Activated CD4-positive, alpha-beta memory T cell treated with anti-CD3 and anti-CD28 coated beads for 36 hours (primary cell): ENCODE measurements at regions of chr16 and their contacts with region 1.

Region 1: GRCh38 chr16:74998481-74999218 is at the start of gene ZNRF1:
- DNase-seq: peak; percentile 90
- H3K4me3 Mint-ChIP-seq: peak within 1 kb of the TSS; percentile 88
- H3K27ac Mint-ChIP-seq: peak within 1 kb of the TSS; percentile 84
- H3K4me1 Mint-ChIP-seq: peaks cover 32% of the 10 kb centered on the region
- H3K27me3 Mint-ChIP-seq: no peaks in the 10 kb centered on the region
- total RNA-seq, gene ZNRF1: 40.9 to 45.6 TPM

Region 2: DNA sequence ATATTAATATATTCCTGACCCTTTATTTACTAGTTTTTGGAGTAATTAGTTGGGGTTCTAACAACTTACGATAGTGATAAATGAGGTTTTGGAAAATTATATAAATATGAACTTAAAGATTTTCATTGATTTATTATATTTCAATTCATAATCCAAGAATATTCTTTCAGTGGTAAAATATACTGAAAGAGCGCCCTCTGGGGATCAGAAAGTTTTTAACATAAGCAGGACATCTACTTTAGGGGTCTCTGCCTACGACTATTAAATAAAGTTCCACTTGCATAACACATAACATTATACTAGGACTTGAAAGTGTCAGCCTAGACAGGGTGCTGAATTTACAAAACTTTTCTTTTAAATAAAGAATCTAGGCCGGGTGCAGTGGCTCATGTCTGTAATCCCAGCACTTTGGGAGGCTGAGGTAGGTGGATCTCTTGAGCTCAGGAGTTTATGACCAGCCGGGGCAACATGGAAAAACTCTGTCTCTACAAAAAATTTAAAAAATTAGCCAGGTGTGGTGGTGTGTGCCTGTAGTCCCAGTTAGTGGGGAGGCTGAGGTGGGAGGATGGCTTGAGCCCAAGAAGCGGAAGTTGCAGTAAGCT is 347.6 kb before region 1 on chr16:
- CTCF ChIA-PET with region 1: no interaction called
- POLR2A ChIA-PET with region 1: no interaction called
- intact Hi-C with region 1: no loop called
- DNase-seq: no peak
- H3K4me3 Mint-ChIP-seq: no peak overlapping the region
- H3K27ac Mint-ChIP-seq: no peak overlapping the region
- H3K4me1 Mint-ChIP-seq: peaks cover 30% of the 10 kb centered on the region
- H3K27me3 Mint-ChIP-seq: no peaks in the 10 kb centered on the region

Region 3: DNA sequence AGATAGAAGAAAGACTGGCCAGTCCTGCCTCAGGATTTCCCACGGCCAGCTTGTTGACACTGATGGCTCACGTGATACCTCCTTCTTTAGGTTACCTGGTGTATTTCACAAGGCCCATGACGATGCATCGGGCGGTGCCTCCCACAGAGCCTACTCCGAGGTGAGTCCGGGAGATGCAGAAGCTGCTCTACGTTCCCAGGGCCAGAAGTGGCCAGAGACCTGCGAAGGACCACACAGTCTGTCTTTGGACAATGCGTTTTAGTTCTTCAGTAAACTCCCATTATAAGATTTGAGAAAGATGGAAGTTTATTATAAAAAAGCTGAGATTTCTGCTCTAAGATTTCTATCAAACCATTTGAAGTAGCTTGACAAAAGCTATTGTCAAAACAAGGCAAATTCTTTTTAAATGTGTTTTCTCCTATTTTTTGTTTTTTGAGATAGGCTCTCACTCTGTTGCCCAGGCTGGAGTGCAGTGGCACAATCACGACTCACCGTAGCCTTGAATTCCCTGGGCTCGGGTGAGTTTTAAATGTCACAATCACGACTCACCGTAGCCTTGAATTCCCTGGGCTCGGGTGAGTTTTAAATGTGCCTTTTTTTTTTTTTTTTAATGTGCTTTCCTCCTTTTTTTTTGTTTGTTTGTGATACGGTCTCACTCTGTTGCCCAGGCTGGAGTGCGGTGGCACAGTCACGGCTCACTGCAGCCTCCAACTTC is 154.8 kb before region 1 on chr16:
- CTCF ChIA-PET with region 1: no interaction called
- POLR2A ChIA-PET with region 1: no interaction called
- intact Hi-C with region 1: no loop called
- DNase-seq: no peak
- H3K4me3 Mint-ChIP-seq: no peak overlapping the region
- H3K27ac Mint-ChIP-seq: no peak overlapping the region
- H3K4me1 Mint-ChIP-seq: no peaks in the 10 kb centered on the region
- H3K27me3 Mint-ChIP-seq: no peaks in the 10 kb centered on the region

Region 4: GRCh38 chr16:74984535-74985296 is 13.9 kb before region 1 on chr16 and contains the start of gene WDR59:
- CTCF ChIA-PET with region 1: interaction called, 21 read pairs
- POLR2A ChIA-PET with region 1: interaction called, 9 read pairs
- intact Hi-C with region 1: loop called (anchors 1 kb)
- DNase-seq: peak; percentile 99
- H3K4me3 Mint-ChIP-seq: peak within 1 kb of the TSS; percentile 86
- H3K27ac Mint-ChIP-seq: peak within 1 kb of the TSS; percentile 74
- H3K4me1 Mint-ChIP-seq: peaks cover 19% of the 10 kb centered on the region
- H3K27me3 Mint-ChIP-seq: no peaks in the 10 kb centered on the region
- total RNA-seq, gene WDR59: 63.5 to 65.7 TPM

Region 5: DNA sequence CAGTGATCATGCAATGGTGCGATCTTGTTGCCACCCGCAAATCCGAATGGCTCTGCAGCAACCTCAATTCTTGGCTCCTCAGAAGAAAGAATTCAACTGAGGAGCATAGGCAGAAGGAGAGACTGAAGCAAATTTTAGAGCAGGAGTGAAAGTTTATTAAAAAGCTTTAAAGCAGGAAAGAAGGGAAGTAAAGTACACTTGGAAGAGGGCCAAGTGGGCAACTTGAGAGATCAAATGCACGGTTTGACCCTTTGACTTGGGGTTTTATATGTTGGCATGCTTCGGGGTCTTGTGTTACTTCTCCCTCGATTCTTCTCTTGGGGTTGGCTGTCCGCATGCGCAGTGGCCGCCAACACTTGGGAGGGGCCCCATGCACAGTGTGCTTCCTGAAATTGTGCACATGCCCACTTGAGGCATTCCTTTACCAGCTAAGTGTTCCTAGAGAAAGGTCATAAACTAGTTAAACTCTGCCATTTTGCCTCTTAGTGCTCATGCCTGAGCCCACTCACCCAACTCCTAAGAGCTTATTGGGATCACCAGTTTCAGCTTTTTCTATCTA is 36.8 kb after region 1 on chr16:
- CTCF ChIA-PET with region 1: no interaction called
- POLR2A ChIA-PET with region 1: no interaction called
- intact Hi-C with region 1: no loop called
- DNase-seq: no peak
- H3K4me3 Mint-ChIP-seq: no peak overlapping the region
- H3K27ac Mint-ChIP-seq: no peak overlapping the region
- H3K4me1 Mint-ChIP-seq: peaks cover 6% of the 10 kb centered on the region
- H3K27me3 Mint-ChIP-seq: no peaks in the 10 kb centered on the region

Region 6: DNA sequence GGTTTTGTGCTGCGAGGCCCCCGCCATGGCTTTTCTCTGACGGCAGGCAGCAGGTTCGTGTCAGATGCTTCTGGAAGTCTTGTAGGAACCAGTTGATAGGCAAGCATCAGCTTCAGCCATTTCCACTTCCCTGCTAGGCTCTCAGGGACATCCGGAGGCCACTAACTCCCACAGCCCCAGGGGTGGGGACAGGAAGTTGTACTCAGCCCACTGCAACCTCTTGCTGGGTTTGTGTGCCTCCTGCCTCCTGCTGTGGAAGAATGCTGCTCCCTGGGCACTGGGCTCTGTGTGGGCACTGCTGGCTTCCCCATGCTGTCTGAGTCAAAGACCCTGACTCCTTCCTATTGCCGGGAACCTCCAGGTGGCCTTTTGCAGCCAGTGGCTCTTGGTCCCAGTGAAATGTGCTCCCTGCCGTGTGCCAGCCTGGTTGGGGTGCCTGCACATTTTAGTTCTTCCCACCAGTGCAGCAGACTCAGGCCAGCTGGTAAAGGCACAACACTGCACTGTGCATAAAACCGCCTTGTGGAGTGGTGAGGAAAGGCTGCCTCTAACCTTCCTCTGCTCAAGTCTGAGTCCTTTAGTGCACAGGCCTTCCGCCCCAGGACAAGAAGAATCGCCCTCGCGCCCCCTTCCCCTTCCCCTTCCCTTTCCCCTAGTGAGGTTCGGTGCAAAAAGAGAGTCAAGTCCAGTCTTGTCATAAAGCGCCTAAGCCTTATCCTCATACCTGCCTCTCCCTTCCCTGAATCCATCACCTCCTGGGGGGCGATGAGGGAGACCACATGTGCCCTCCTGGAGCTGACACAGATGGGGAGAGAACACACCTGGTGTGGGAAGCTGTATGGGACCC is 101.3 kb after region 1 on chr16:
- CTCF ChIA-PET with region 1: interaction called, 20 read pairs
- POLR2A ChIA-PET with region 1: interaction called, 3 read pairs
- intact Hi-C with region 1: loop called (anchors 1 kb)
- DNase-seq: peak; percentile 76
- H3K4me3 Mint-ChIP-seq: peak overlapping the region; percentile 50
- H3K27ac Mint-ChIP-seq: peak overlapping the region; percentile 92
- H3K4me1 Mint-ChIP-seq: peaks cover 57% of the 10 kb centered on the region
- H3K27me3 Mint-ChIP-seq: no peaks in the 10 kb centered on the region

Region 7: GRCh38 chr16:75116081-75116910 is 117.6 kb after region 1 on chr16 and contains the start of gene LDHD:
- CTCF ChIA-PET with region 1: interaction called, 222 read pairs
- POLR2A ChIA-PET with region 1: interaction called, 35 read pairs
- intact Hi-C with region 1: loop called (anchors 1 kb)
- DNase-seq: peak; percentile 37
- H3K4me3 Mint-ChIP-seq: peak within 1 kb of the TSS; percentile 50
- H3K27ac Mint-ChIP-seq: no peak within 1 kb of the TSS
- H3K4me1 Mint-ChIP-seq: peaks cover 12% of the 10 kb centered on the region
- H3K27me3 Mint-ChIP-seq: peaks cover 7% of the 10 kb centered on the region
- total RNA-seq, gene LDHD: 0.43 to 0.75 TPM